ENCODE measurements at regions of chr15 and their contacts with region 1.

Region 1: GRCh38 chr15:66841953-66842681 is 140.1 kb downstream of the SMAD6 start:
- DNase-seq: peak; percentile 54
- ATAC-seq: peak; percentile 77
- H3K4me3 ChIP-seq: peak overlapping the region; percentile 43 to 70 (median 52)
- H3K27ac ChIP-seq: no peak overlapping the region
- H3K4me1 ChIP-seq: peaks cover 25% of the 10 kb centered on the region
- H3K27me3 ChIP-seq: peaks cover 6 to 47% of the 10 kb centered on the region in 2 experiments
- CTCF ChIP-seq: no peak
- EP300 ChIP-seq: no peak
- POLR2A ChIP-seq: no peak
- RAD21 ChIP-seq: no peak

Region 2: GRCh38 chr15:66459818-66460615 is 382.1 kb before region 1 on chr15:
- CTCF ChIA-PET with region 1: no interaction called
- POLR2A ChIA-PET with region 1: no interaction called
- in situ Hi-C with region 1: no loop called
- intact Hi-C with region 1: no loop called
- DNase-seq: no peak
- ATAC-seq: no peak
- H3K4me3 ChIP-seq: no peak overlapping the region
- H3K27ac ChIP-seq: no peak overlapping the region
- H3K4me1 ChIP-seq: no peaks in the 10 kb centered on the region
- H3K27me3 ChIP-seq: no peaks in the 10 kb centered on the region
- CTCF ChIP-seq: no peak
- EP300 ChIP-seq: no peak
- POLR2A ChIP-seq: no peak
- RAD21 ChIP-seq: no peak

Region 3: DNA sequence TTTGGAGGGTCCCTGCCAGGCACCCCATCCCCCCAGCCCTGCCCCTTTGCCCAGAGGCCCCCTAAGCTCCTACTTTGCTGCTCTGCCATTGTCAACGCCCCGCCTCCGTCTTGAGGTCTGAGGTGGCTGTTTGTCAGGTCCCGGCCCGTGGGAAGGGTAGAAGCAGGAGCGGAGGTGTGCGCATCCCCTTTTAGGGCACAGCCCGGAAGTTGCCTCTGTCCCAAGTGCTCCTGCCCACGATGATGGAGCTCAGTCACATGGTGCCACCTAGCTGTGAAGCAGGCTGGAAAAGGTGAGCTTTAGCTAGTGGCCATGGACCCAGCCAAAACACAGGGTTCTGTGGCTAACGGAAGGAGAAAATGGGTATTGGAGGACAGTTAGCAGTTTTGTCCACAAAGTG is 247.8 kb before region 1 on chr15:
- CTCF ChIA-PET with region 1: no interaction called
- POLR2A ChIA-PET with region 1: no interaction called
- in situ Hi-C with region 1: no loop called
- intact Hi-C with region 1: no loop called
- DNase-seq: no peak
- ATAC-seq: peak; percentile 51; the same call in 2 of the 3 replicates
- H3K4me3 ChIP-seq: no peak overlapping the region
- H3K27ac ChIP-seq: no peak overlapping the region
- H3K4me1 ChIP-seq: peaks cover 9% of the 10 kb centered on the region
- H3K27me3 ChIP-seq: no peaks in the 10 kb centered on the region; a peak in 1 of 5 replicates
- CTCF ChIP-seq: peak; percentile 58
- EP300 ChIP-seq: no peak
- POLR2A ChIP-seq: no peak
- RAD21 ChIP-seq: no peak

Region 4: GRCh38 chr15:66789029-66790025 is 52.8 kb before region 1 on chr15:
- CTCF ChIA-PET with region 1: no interaction called
- POLR2A ChIA-PET with region 1: no interaction called
- in situ Hi-C with region 1: loop called (anchors 10 kb)
- intact Hi-C with region 1: no loop called
- DNase-seq: peak; percentile 30
- ATAC-seq: peak; percentile 79
- H3K4me3 ChIP-seq: no peak overlapping the region
- H3K27ac ChIP-seq: no peak overlapping the region
- H3K4me1 ChIP-seq: peaks cover 9% of the 10 kb centered on the region
- H3K27me3 ChIP-seq: no peaks in the 10 kb centered on the region
- CTCF ChIP-seq: peak; percentile 62
- EP300 ChIP-seq: no peak
- POLR2A ChIP-seq: no peak
- RAD21 ChIP-seq: no peak; the same call in 1 of the 2 replicates

Region 5: DNA sequence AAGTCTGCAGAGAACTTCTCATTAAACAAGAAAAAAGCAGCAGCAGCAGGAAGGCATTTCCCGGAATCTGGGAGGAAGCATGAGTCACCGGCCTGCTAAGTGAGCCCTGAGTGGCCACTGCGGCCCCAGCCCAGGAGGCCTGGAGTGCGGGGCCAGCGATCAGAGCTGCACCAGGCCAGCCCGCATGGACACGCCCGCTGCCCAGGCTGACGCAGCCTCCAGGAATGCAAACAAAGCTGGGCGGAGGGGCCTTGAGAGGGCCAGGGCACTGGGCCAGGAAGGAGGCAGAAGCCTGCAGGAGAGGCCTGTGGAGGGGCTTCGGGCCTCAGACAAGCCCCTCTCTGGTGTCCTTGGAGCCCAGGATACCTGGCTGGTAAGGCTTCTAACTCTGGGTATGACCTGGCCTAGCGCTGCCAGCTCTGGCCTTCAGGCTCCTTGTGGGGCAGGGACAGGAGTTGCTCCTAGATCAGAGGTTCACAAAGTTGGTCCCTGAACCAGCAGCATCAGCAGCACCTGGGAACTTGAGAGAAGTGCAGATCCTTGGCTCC is 38.9 kb before region 1 on chr15:
- CTCF ChIA-PET with region 1: no interaction called
- POLR2A ChIA-PET with region 1: no interaction called
- in situ Hi-C with region 1: no loop called
- intact Hi-C with region 1: loop called (anchors 5 kb)
- DNase-seq: peak; percentile 84
- ATAC-seq: peak; percentile 100
- H3K4me3 ChIP-seq: peak overlapping the region in 1 of 3 experiments; percentile 50; a peak in 2 of 6 replicates
- H3K27ac ChIP-seq: no peak overlapping the region
- H3K4me1 ChIP-seq: peaks cover 25% of the 10 kb centered on the region
- H3K27me3 ChIP-seq: peaks cover 0 to 4% of the 10 kb centered on the region in 2 experiments; a peak in 2 of 5 replicates
- CTCF ChIP-seq: no peak
- EP300 ChIP-seq: peak in 1 of 2 experiments; percentile 47; a peak in 1 of 4 replicates
- POLR2A ChIP-seq: no peak
- RAD21 ChIP-seq: peak; percentile 19; the same call in 1 of the 2 replicates

Measured in HepG2 (cell line).